Activated CD4-positive, alpha-beta memory T cell treated with anti-CD3 and anti-CD28 coated beads for 36 hours (primary cell): ENCODE measurements at regions of chr9 and their contacts with region 1.

Region 1: GRCh38 chr9:31799953-31800609 is 584.4 kb upstream of the ACO1 start:
- DNase-seq: no peak
- H3K4me3 Mint-ChIP-seq: no peak overlapping the region
- H3K27ac Mint-ChIP-seq: no peak overlapping the region
- H3K4me1 Mint-ChIP-seq: peaks cover 14% of the 10 kb centered on the region
- H3K27me3 Mint-ChIP-seq: no peaks in the 10 kb centered on the region

Region 2: GRCh38 chr9:31820426-31820825 is 20.3 kb after region 1 on chr9:
- CTCF ChIA-PET with region 1: no interaction called
- POLR2A ChIA-PET with region 1: no interaction called
- intact Hi-C with region 1: no loop called
- DNase-seq: no peak
- H3K4me3 Mint-ChIP-seq: no peak overlapping the region
- H3K27ac Mint-ChIP-seq: no peak overlapping the region
- H3K4me1 Mint-ChIP-seq: no peaks in the 10 kb centered on the region
- H3K27me3 Mint-ChIP-seq: peaks cover 6% of the 10 kb centered on the region

Region 3: GRCh38 chr9:31839273-31839672 is 39.2 kb after region 1 on chr9:
- CTCF ChIA-PET with region 1: no interaction called
- POLR2A ChIA-PET with region 1: no interaction called
- intact Hi-C with region 1: no loop called
- DNase-seq: no peak
- H3K4me3 Mint-ChIP-seq: no peak overlapping the region
- H3K27ac Mint-ChIP-seq: no peak overlapping the region
- H3K4me1 Mint-ChIP-seq: no peaks in the 10 kb centered on the region
- H3K27me3 Mint-ChIP-seq: no peaks in the 10 kb centered on the region

Region 4: DNA sequence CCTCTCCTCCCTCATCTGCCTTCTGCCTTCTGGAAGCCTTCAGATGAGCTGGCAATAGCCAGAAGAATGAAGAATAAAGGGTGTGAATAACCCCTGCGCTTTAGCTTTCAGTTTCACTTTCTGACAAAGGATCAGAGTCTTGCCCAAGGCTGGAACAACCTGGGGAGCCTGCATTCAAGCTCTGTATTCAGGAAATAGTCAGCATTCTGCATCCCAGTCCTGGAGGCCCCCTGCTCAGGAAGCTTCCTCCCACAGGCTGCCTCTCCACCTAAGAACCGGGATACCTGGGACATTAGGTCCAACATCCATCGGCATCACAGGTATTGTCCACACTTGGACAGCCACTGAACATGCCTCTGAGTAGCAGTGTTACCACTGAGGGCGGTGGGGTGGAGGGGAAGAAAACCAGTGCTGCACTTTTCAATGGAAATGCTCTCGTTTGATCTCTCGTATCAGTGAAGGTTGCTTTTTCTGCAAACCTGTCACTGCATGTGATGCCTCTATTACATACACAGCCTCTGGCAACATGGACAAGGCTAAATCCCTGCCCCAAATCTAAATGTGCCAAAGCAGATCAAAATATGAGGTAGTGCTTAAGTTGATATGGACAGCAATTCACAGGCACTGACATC is 544.6 kb after region 1 on chr9:
- CTCF ChIA-PET with region 1: no interaction called
- POLR2A ChIA-PET with region 1: no interaction called
- intact Hi-C with region 1: loop called (anchors 10 kb)
- DNase-seq: no peak
- H3K4me3 Mint-ChIP-seq: no peak overlapping the region
- H3K27ac Mint-ChIP-seq: no peak overlapping the region
- H3K4me1 Mint-ChIP-seq: peaks cover 12% of the 10 kb centered on the region
- H3K27me3 Mint-ChIP-seq: no peaks in the 10 kb centered on the region